Sigmoid colon (tissue), 7 donors: ENCODE measurements at regions of chr13 and their contacts with region 1.

Region 1: GRCh38 chr13:73981595-73981994 is 152.6 kb downstream of the KLF12 start:
- DNase-seq: no peak
- H3K4me3 ChIP-seq: no peak overlapping the region
- H3K27ac ChIP-seq: peak overlapping the region in 2 of 4 donors; percentile 15 to 20
- H3K4me1 ChIP-seq: peaks cover 0 to 25% (median 14%) of the 10 kb centered on the region in 4 donors
- H3K27me3 ChIP-seq: no peaks in the 10 kb centered on the region
- CTCF ChIP-seq: no peak
- EP300 ChIP-seq: no peak
- POLR2A ChIP-seq: no peak

Region 2: GRCh38 chr13:73259061-73260017 is 722.3 kb before region 1 on chr13:
- intact Hi-C with region 1: no loop called
- DNase-seq: peak; percentile 72
- H3K4me3 ChIP-seq: no peak overlapping the region
- H3K27ac ChIP-seq: peak overlapping the region in 1 of 4 donors; percentile 4
- H3K4me1 ChIP-seq: no peaks in the 10 kb centered on the region
- H3K27me3 ChIP-seq: no peaks in the 10 kb centered on the region
- CTCF ChIP-seq: no peak
- EP300 ChIP-seq: no peak
- POLR2A ChIP-seq: no peak

Region 3: DNA sequence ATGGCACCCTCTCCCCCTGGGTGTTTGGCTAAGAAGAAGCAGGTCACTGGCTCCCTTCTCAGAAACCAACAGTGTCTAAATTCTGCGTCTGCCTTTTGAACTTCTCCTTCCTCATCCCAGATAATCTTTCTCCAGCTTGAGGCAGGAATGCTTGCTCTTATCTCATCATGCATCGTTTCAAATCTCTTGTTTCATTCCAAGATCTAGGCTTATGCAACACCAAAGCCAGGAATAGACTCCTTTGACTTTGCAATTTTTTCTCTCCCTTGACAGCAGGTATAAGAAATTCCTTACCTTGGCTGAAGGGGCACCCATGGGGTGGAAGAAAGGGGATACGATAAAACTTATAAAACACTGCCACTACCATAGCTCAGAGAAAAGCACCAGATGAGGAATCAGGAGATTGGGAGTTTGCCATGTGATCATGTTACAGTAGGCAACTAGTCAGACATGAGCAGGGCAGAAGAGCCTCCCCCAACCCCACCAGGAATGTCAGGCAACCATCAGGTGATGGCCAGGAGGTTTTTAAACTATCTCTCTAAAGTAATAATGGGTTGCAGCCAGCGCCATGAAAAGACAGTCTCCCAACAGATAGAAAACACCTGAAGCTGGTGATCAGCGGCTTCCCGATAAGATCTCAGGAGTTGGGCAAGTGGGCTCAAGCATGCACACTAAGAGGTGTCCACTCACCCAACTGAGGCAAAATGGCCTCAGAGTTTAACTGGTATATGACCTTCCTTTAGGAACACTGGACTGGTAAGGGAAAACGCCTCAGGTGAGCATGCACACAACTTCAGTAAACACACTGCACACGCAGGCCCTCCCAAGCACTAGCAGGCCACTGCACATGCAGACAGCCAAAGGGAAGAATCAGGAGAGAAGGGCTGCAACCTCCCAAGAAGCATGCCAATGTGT is 346.2 kb before region 1 on chr13:
- intact Hi-C with region 1: no loop called
- DNase-seq: no peak
- H3K4me3 ChIP-seq: no peak overlapping the region
- H3K27ac ChIP-seq: no peak overlapping the region
- H3K4me1 ChIP-seq: peaks cover 0 to 10% (median 3%) of the 10 kb centered on the region in 4 donors
- H3K27me3 ChIP-seq: no peaks in the 10 kb centered on the region
- CTCF ChIP-seq: no peak
- EP300 ChIP-seq: no peak
- POLR2A ChIP-seq: no peak

Region 4: DNA sequence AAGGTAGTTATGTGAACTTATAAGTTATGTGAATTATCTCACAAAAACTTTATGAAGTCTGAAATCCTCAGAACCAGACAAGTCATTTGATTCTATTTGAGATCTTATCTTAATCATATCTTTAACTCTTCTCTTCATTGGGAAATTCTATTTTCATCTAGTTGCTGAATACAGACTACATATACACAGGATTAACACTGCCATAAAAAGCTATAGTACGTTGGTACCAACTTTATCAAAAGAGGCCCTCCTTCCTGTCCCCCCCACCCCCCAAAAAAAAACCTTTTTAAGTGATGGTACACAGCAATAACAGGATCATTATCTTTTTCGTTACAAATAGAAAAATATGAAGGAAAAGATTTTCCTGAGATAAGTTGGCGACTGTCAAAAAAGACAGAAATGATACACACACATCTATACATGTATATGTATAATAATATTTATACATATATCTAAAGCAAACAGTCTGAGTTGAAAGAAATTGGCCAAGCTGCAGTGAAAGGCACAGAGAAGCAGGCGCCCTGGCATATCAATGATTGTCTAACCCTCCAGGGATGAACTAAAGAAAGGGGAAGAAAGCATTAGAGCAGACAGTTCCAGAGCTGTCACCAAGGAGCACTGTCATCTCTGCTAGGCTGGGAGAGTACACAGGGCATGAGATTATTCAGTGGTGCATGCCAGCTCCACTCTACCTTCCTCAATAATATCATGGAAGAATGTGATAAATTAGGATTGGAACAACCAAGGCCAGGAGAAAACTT is 35.9 kb after region 1 on chr13:
- intact Hi-C with region 1: loop called (anchors 1 kb)
- DNase-seq: no peak
- H3K4me3 ChIP-seq: no peak overlapping the region
- H3K27ac ChIP-seq: no peak overlapping the region
- H3K4me1 ChIP-seq: peaks cover 0 to 10% (median 3%) of the 10 kb centered on the region in 4 donors
- H3K27me3 ChIP-seq: no peaks in the 10 kb centered on the region
- CTCF ChIP-seq: no peak
- EP300 ChIP-seq: no peak
- POLR2A ChIP-seq: no peak